Gastrocnemius medialis (tissue), 4 donors: ENCODE measurements at regions of chrX and their contacts with region 1.

Region 1: DNA sequence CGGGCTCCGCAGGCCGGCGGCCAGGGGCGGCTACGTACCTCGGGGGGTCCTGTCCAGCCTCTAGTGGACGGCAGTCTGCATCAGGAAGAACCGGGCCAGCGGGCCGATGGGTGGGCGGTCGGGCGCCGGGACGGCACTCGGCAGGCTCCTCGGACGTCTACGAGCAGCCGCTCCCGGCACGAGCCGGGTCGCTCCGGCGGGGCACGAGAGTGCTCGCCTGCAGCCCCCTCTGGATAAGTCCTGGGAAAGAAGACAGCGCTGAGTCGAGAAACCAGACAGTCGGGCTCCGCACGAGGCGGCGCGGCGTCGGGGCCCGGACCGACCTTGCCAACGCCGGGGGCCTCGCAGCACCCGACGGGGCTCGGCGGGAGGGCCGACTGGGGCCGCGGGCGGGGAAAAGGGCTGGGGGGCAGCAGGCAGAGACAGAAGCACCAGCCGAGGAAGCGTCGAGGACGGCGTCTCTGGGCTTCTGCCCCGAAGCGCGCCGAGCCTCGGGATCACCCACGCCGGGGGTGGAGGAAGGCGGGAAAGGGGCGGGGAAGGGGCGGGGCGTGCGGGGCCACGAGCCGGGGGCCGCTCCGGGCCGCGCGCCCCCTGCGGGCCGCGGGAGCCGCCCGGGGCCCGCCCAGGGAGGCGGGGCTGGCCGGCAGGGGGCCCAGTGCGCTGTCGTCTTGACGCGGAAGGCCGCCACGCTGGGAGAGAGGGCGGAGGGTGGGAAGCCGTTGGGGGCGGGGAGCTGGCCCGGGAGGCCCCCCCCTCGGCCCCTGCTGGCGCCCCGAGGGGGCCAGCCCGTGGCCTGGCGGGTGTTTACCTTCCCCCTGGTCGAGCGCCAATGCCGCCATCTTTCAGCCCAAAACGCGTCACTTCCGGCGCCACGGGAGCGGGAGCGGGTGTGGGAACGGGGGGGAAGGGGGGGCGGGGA is 1.9 kb downstream of the KLHL15 start:
- DNase-seq: peak; percentile 67 to 82
- ATAC-seq: peak; percentile 81 to 85
- H3K4me3 ChIP-seq: peak overlapping the region; percentile 69 to 92 (median 79)
- H3K27ac ChIP-seq: peak overlapping the region; percentile 90 to 98 (median 94)
- H3K4me1 ChIP-seq: peaks cover 3 to 4% of the 10 kb centered on the region in 2 donors
- H3K27me3 ChIP-seq: peaks cover 0 to 3% (median 0%) of the 10 kb centered on the region in 3 donors
- CTCF ChIP-seq: peak in 1 of 5 experiments; percentile 32
- POLR2A ChIP-seq: peak; percentile 84 to 85

Region 2: DNA sequence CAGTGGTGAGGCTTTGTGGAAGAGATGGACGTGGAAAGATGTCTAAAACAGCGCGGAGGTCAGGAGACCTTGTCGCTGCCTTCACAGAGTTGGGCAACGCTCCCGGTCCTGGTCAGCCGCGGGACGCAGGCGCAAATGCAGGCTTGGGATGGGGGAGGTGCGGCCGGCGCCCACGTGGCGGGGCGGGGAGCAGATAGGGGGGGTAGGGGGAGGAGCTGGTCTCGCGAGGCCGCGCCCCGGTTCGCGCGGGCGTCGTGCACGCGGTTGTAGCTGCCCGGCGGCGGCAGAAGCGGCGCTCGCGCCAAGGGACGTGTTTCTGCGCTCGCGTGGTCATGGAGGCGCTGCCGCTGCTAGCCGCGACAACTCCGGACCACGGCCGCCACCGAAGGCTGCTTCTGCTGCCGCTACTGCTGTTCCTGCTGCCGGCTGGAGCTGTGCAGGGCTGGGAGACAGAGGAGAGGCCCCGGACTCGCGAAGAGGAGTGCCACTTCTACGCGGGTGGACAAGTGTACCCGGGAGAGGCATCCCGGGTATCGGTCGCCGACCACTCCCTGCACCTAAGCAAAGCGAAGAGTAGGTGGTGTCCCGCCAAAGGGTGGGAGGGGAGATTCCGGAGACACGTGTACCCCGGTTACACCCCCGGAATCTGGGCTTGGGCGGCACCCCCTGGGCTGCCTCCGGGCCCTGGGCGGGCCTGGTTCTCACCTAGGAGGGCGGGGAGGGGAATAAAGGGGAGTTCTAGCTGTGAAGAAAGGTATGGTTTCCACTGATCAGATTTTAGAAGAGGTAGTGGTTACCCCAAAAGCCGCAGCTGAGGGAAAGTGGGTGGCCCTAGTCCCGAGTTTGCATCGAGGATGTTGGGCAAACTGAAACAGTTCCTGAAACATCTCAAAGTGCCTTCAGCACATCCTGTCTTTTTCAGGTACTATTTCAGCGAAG is 357.6 kb before region 1 on chrX and contains the start of gene PRDX4:
- in situ Hi-C with region 1: no loop called
- intact Hi-C with region 1: loop called (anchors 2 kb)
- DNase-seq: peak; percentile 80 to 88
- ATAC-seq: peak; percentile 93 to 97
- H3K4me3 ChIP-seq: peak within 1 kb of the TSS; percentile 62 to 72 (median 72)
- H3K27ac ChIP-seq: peak within 1 kb of the TSS; percentile 81 to 87 (median 86)
- H3K4me1 ChIP-seq: peaks cover 4 to 9% of the 10 kb centered on the region in 2 donors
- H3K27me3 ChIP-seq: no peaks in the 10 kb centered on the region
- CTCF ChIP-seq: no peak
- POLR2A ChIP-seq: peak; percentile 43 to 49
- total RNA-seq, gene PRDX4: 21.2 to 40.7 (median 37.6) TPM

Region 3: DNA sequence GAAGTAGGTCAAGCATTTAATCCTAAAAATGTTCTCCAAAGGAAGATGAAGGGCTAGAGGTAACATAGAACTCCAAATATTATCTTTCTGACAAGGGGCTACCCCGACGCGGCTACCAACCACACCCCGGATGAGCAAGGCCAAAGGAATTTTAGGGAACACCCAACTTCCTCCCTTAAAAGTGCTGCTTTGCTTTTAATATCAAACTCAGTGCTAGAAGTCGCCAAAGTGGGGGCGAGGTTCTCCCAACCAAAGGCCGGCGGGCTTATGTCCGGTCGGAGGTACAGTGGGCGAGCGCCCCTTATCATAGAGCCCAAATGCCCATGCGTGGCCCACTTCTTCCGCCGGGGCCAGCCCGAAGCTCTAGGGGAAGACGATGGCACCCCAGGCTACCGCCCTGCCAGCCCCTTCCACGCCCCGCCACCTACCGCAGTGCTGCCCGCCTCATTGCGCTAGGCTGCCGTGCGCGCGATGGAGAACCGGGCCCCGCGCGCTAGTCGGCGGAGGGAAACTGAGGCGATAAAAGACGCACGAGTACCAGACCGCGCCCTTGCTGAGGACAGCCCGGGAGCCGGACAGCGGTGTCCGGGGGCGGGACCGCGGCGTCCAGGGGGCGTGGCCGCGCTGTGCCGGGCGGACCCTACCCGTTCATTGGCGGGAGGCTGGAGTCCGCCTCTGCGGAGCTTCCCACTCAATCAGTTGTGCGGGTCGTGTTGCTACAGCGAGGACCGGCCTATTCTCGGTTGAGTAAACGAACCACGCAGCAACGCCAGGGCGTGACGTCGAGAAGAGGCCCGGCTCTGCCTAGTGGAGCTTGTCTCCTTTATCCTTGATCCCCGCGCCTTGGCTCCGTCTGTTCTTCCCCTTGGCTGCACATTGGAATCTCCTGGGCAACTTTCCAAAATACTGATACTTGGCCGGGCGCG is 282.1 kb before region 1 on chrX and contains the start of gene ACOT9:
- in situ Hi-C with region 1: no loop called
- intact Hi-C with region 1: loop called (anchors 1 kb)
- DNase-seq: peak; percentile 85 to 96
- ATAC-seq: peak; percentile 91 to 95
- H3K4me3 ChIP-seq: peak within 1 kb of the TSS; percentile 73 to 85 (median 82)
- H3K27ac ChIP-seq: peak within 1 kb of the TSS; percentile 91 to 96 (median 94)
- H3K4me1 ChIP-seq: no peaks in the 10 kb centered on the region
- H3K27me3 ChIP-seq: no peaks in the 10 kb centered on the region
- CTCF ChIP-seq: no peak
- POLR2A ChIP-seq: peak; percentile 78 to 81
- total RNA-seq, gene ACOT9: 12.3 to 21.9 (median 20.6) TPM

Region 4: DNA sequence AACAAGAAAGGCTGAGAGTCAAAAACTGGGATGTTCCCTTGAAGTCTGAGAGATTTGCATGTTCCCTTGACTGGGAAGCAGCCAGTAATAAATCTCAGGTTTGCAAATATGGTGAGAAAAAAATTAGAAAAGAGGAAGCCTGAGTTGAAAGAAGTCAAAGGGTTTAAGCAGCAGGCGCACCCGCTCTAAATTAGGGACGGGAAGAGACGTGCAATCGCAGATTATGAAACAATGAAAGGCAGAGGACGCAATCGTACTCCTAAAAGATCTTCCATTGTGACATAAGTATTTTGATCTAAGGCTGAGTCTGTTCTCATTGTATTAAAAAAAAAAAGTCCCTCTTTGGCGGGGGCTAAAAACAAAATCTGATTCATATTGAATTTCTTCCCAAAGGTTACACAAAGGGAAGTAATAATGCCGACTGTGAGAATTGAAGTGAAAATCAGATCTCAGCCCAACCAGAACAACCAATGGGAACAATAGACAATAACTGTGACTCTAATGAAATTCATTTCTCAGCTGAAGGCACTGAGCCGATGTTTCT is 213.9 kb before region 1 on chrX:
- in situ Hi-C with region 1: no loop called
- intact Hi-C with region 1: no loop called
- DNase-seq: peak in 1 of 2 donors; percentile 18
- ATAC-seq: peak; percentile 58 to 60
- H3K4me3 ChIP-seq: no peak overlapping the region
- H3K27ac ChIP-seq: peak overlapping the region in 2 of 4 donors; percentile 13 to 22
- H3K4me1 ChIP-seq: no peaks in the 10 kb centered on the region
- H3K27me3 ChIP-seq: no peaks in the 10 kb centered on the region
- CTCF ChIP-seq: no peak
- POLR2A ChIP-seq: no peak

Region 5: GRCh38 chrX:23938690-23939089 is 86.4 kb before region 1 on chrX:
- in situ Hi-C with region 1: no loop called
- intact Hi-C with region 1: no loop called
- DNase-seq: no peak
- ATAC-seq: no peak
- H3K4me3 ChIP-seq: no peak overlapping the region
- H3K27ac ChIP-seq: no peak overlapping the region
- H3K4me1 ChIP-seq: no peaks in the 10 kb centered on the region
- H3K27me3 ChIP-seq: no peaks in the 10 kb centered on the region
- CTCF ChIP-seq: no peak
- POLR2A ChIP-seq: no peak

Region 6: GRCh38 chrX:23980011-23980441 is 45.1 kb before region 1 on chrX:
- in situ Hi-C with region 1: no loop called
- intact Hi-C with region 1: no loop called
- DNase-seq: no peak
- ATAC-seq: no peak
- H3K4me3 ChIP-seq: no peak overlapping the region
- H3K27ac ChIP-seq: no peak overlapping the region
- H3K4me1 ChIP-seq: no peaks in the 10 kb centered on the region
- H3K27me3 ChIP-seq: no peaks in the 10 kb centered on the region
- CTCF ChIP-seq: no peak
- POLR2A ChIP-seq: no peak

Region 7: GRCh38 chrX:24266996-24267395 is 241.9 kb after region 1 on chrX:
- in situ Hi-C with region 1: no loop called
- intact Hi-C with region 1: no loop called
- DNase-seq: no peak
- ATAC-seq: no peak
- H3K4me3 ChIP-seq: no peak overlapping the region
- H3K27ac ChIP-seq: no peak overlapping the region
- H3K4me1 ChIP-seq: no peaks in the 10 kb centered on the region
- H3K27me3 ChIP-seq: peaks cover 0 to 2% (median 0%) of the 10 kb centered on the region in 3 donors
- CTCF ChIP-seq: no peak
- POLR2A ChIP-seq: no peak

Region 8: GRCh38 chrX:24464836-24465531 is 439.9 kb after region 1 on chrX and contains the start of gene PDK3:
- in situ Hi-C with region 1: no loop called
- intact Hi-C with region 1: loop called (anchors 10 kb)
- DNase-seq: peak; percentile 59 to 75
- ATAC-seq: peak; percentile 92 to 94
- H3K4me3 ChIP-seq: peak within 1 kb of the TSS; percentile 68 to 79 (median 69)
- H3K27ac ChIP-seq: peak within 1 kb of the TSS; percentile 66 to 77 (median 72)
- H3K4me1 ChIP-seq: no peaks in the 10 kb centered on the region
- H3K27me3 ChIP-seq: no peaks in the 10 kb centered on the region
- CTCF ChIP-seq: no peak
- POLR2A ChIP-seq: peak; percentile 58 to 71
- total RNA-seq, gene PDK3: 1.8 to 4.5 (median 2.7) TPM